Activated T-helper 1 cell treated with anti-CD3 and anti-CD28 coated beads, Interleukin-12 subunit alpha, Interleukin-12 subunit beta, Interleukin-2, Interleukin-4 antibody, amounts not matched to agents 30 ng/mL and 10 ng/mL and 1 ng/mL, durations not matched to agents 14 hours and 24 hours and 36 hours (primary cell): ENCODE measurements at regions of chr2 and their contacts with region 1.

Region 1: DNA sequence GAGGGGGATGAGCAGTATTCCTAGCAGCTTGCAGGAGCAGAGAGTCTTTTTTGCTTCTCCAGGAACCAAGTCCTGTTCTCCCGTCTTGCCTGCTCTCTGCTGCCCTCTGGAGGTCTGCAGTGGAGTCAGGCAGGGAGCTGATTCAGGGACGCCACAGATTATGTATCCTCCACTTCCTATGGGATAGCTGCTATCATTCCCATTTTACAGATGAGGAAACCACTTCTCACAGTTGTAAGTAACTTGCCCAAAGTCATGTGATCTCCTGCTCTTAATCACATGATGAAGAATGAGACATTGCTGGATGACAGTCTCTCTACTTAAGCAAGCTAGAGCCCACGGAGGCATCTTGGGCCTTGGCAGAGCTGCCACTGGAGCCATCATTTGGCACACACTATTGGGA is 8.3 kb downstream of the SLC4A5 start:
- DNase-seq: peak; percentile 57
- H3K4me3 Mint-ChIP-seq: no peak overlapping the region
- H3K27ac Mint-ChIP-seq: no peak overlapping the region
- H3K4me1 Mint-ChIP-seq: no peaks in the 10 kb centered on the region
- H3K27me3 Mint-ChIP-seq: peaks cover 2% of the 10 kb centered on the region

Region 2: DNA sequence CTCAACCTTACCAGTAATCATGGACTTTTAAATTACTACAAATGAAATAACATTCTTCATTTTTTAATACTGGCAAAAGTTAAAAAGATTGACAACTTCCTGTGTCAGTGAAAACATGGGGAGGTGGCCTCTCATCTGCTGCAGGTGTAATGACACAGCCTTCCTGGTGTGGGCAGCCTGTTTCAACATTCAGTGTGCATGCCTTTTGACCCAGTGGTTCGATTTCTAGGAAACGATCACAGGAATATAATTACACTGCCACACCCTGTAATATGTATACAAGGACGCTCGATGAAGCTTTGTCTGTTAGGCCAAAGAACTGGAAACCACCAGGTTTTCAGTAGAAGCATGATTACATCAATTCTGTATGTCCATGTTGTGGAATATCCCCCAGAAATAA is 67.9 kb before region 1 on chr2:
- intact Hi-C with region 1: loop called (anchors 1 kb)
- DNase-seq: peak; percentile 43
- H3K4me3 Mint-ChIP-seq: no peak overlapping the region
- H3K27ac Mint-ChIP-seq: peak overlapping the region; percentile 23
- H3K4me1 Mint-ChIP-seq: peaks cover 13% of the 10 kb centered on the region
- H3K27me3 Mint-ChIP-seq: peaks cover 2% of the 10 kb centered on the region

Region 3: GRCh38 chr2:74364533-74365505 is 29.9 kb after region 1 on chr2:
- intact Hi-C with region 1: no loop called
- DNase-seq: no peak
- H3K4me3 Mint-ChIP-seq: no peak overlapping the region
- H3K27ac Mint-ChIP-seq: no peak overlapping the region
- H3K4me1 Mint-ChIP-seq: no peaks in the 10 kb centered on the region
- H3K27me3 Mint-ChIP-seq: no peaks in the 10 kb centered on the region